ENCODE measurements at regions of chr5 and their contacts with region 1.

Region 1: DNA sequence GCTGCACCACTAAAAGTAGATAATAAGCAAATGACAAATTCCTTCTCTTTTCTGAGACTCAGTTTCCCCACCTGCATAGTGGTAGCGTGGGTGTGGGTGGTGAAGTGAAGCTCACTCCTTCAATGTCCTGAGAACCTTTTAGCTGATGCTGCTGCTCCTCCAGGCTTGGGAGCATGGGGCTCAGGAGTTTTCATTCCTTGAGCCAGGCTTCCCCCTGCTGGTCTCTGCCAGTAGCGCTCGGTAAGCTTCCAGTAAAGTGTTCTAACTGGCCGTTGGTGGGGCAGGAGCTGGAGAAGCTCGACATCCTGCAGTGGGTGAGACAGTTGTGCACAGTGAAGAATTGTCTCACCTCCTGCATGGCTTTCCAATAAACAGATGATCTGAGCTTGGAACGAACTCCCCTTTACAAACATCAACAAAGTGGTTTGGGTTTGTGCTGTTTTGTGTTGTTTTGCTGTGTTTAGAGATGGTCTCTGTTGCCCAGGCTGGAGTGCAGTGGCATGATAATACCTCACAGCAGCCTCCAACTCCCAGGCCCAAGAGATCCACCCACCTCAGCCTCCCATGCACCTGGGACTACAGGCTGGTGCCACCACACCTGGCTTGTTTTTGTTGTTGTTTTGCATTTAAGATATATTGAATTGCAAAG is 34.6 kb downstream of the SPARC start:
- DNase-seq: peak; percentile 80
- H3K4me3 ChIP-seq: no peak overlapping the region
- H3K27ac ChIP-seq: no peak overlapping the region
- H3K4me1 ChIP-seq: no peaks in the 10 kb centered on the region
- H3K27me3 ChIP-seq: peaks cover 0 to 4% of the 10 kb centered on the region in 2 experiments
- CTCF ChIP-seq: peak; percentile 88 to 92
- POLR2A ChIP-seq: no peak

Region 2: DNA sequence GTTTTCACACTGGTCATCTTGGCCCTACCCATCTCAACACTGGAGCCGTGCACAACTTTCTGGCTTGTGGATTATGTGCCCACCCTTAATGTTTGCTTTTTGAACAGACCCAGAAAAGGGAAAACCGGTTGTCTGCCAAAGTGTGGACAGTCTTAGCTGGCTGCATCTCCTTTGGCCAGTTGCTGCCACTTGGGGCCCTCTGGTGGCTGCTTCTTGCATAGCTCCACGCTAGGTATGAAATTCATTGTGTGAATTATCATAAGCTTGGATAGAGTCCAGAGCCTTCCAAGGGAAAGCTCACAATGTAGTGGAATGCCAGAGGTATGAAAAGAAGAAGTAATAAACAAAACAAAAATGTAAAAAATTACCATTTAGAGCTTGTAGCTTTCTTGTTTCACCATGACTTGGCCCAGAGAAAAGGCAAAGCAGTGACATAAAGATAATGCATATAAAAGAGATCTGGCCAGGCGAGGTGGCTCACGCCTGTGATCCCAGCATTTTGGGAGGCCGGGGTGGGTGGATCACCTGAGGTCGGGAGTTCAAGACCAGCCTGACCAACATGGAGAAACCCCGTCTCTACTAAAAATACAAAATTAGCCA is 336.0 kb before region 1 on chr5:
- CTCF ChIA-PET with region 1: interaction called, 16 read pairs
- POLR2A ChIA-PET with region 1: no interaction called
- dilution Hi-C with region 1: no loop called
- intact Hi-C with region 1: loop called (anchors 1 kb)
- DNase-seq: peak; percentile 73
- H3K4me3 ChIP-seq: no peak overlapping the region
- H3K27ac ChIP-seq: no peak overlapping the region
- H3K4me1 ChIP-seq: no peaks in the 10 kb centered on the region
- H3K27me3 ChIP-seq: no peaks in the 10 kb centered on the region
- CTCF ChIP-seq: peak; percentile 88 to 90
- POLR2A ChIP-seq: no peak

Region 3: DNA sequence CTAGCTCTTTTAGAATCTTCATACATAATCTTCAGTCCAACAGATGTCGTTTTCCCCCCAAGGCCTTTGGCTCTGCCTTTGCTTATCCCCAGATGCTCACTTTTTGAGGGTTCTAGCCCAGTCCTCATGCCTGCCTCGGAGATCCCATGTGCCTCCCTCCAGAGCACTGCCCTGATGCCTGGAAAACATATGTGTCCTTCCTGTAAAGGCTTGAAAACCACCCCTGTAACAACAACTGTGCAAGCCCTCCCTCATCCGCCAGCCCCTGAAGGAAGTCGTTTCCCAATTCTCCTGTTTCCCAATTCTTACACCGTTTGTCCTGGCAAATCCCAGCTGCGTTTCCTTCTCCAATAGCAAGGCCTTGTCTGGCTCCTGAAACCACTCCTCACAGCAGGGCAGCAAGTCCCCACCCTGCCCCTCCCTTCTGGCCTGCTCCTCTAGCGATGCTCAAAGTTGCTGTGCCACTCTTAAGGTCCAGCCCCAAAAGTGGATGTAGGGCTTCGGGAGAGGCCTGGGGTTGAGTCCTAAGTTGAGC is 152.6 kb before region 1 on chr5:
- CTCF ChIA-PET with region 1: interaction called, 9 read pairs
- POLR2A ChIA-PET with region 1: no interaction called
- dilution Hi-C with region 1: no loop called
- intact Hi-C with region 1: loop called (anchors 1 kb)
- DNase-seq: no peak
- H3K4me3 ChIP-seq: no peak overlapping the region
- H3K27ac ChIP-seq: no peak overlapping the region
- H3K4me1 ChIP-seq: no peaks in the 10 kb centered on the region
- H3K27me3 ChIP-seq: no peaks in the 10 kb centered on the region
- CTCF ChIP-seq: no peak
- POLR2A ChIP-seq: no peak

Region 4: GRCh38 chr5:151523335-151523734 is 128.8 kb before region 1 on chr5:
- CTCF ChIA-PET with region 1: interaction called, 33 read pairs
- POLR2A ChIA-PET with region 1: no interaction called
- dilution Hi-C with region 1: no loop called
- intact Hi-C with region 1: loop called (anchors 1 kb)
- DNase-seq: peak; percentile 52
- H3K4me3 ChIP-seq: no peak overlapping the region
- H3K27ac ChIP-seq: no peak overlapping the region
- H3K4me1 ChIP-seq: no peaks in the 10 kb centered on the region
- H3K27me3 ChIP-seq: peaks cover 0 to 2% of the 10 kb centered on the region in 2 experiments
- CTCF ChIP-seq: peak; percentile 53 to 57
- POLR2A ChIP-seq: no peak

Region 5: DNA sequence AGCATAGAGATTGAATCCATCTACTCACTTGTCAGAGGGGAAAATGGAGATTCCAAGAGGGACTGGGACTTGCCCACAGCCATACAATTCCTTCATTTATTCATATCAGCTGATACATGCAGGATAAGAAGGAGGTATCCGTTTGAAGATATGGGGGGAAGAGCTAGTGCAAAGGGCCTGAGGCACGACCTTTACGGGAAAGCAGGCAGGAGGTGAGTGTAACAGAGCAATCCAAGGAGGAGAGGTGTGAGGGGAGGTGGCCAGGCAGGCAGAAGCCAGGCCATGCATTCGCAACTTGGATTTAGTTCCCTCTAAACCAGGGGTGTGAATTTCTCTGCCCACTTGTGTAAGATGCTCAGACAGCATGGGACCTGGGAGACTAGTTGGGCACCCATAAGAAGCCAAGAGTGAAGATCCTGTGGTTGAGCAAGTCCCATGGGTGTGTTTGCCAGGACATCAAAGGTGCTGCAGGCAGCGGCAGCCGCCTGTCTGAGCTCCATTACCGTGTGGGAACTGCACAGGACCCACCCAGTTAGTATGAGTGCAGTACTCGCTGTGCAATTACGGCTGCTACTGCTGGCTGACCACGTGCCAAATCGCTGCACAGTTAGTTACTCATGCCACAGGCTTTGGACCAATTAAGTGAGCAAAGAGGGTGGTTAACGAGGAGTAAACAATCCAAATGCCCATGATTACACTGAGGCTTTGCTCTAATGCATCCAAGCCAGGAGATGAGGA is 29.6 kb before region 1 on chr5:
- CTCF ChIA-PET with region 1: no interaction called
- POLR2A ChIA-PET with region 1: no interaction called
- dilution Hi-C with region 1: no loop called
- intact Hi-C with region 1: no loop called
- DNase-seq: no peak
- H3K4me3 ChIP-seq: no peak overlapping the region
- H3K27ac ChIP-seq: no peak overlapping the region
- H3K4me1 ChIP-seq: no peaks in the 10 kb centered on the region
- H3K27me3 ChIP-seq: peaks cover 2 to 3% of the 10 kb centered on the region in 2 experiments
- CTCF ChIP-seq: no peak
- POLR2A ChIP-seq: no peak

Region 6: GRCh38 chr5:151675611-151676313 is 23.6 kb after region 1 on chr5:
- CTCF ChIA-PET with region 1: interaction called, 39 read pairs
- POLR2A ChIA-PET with region 1: no interaction called
- dilution Hi-C with region 1: no loop called
- intact Hi-C with region 1: no loop called
- DNase-seq: peak; percentile 87
- H3K4me3 ChIP-seq: peak overlapping the region in 1 of 3 experiments; percentile 16
- H3K27ac ChIP-seq: peak overlapping the region; percentile 99
- H3K4me1 ChIP-seq: peaks cover 98% of the 10 kb centered on the region
- H3K27me3 ChIP-seq: no peaks in the 10 kb centered on the region
- CTCF ChIP-seq: no peak
- POLR2A ChIP-seq: no peak